ENCODE measurements at regions of chr10 and their contacts with region 1.

Region 1: GRCh38 chr10:27099916-27100812 is at the start of gene ANKRD26:
- DNase-seq: peak; percentile 96 to 98 (median 97)
- H3K4me3 ChIP-seq: peak within 1 kb of the TSS; percentile 50 to 86 (median 53)
- H3K4me3 Mint-ChIP-seq: peak within 1 kb of the TSS; percentile 88 to 97
- H3K27ac ChIP-seq: peak within 1 kb of the TSS; percentile 60 to 84
- H3K27ac Mint-ChIP-seq: peak within 1 kb of the TSS; percentile 89 to 96 (median 94)
- H3K4me1 ChIP-seq: peaks cover 11 to 15% of the 10 kb centered on the region in 2 donors
- H3K4me1 Mint-ChIP-seq: peaks cover 21% of the 10 kb centered on the region
- H3K27me3 ChIP-seq: no peaks in the 10 kb centered on the region
- H3K27me3 Mint-ChIP-seq: peaks cover 0 to 5% (median 1%) of the 10 kb centered on the region in 3 donors
- CTCF ChIP-seq: no peak
- polyA plus RNA-seq, gene ANKRD26: 0.36 to 0.73 (median 0.36) TPM

Region 2: DNA sequence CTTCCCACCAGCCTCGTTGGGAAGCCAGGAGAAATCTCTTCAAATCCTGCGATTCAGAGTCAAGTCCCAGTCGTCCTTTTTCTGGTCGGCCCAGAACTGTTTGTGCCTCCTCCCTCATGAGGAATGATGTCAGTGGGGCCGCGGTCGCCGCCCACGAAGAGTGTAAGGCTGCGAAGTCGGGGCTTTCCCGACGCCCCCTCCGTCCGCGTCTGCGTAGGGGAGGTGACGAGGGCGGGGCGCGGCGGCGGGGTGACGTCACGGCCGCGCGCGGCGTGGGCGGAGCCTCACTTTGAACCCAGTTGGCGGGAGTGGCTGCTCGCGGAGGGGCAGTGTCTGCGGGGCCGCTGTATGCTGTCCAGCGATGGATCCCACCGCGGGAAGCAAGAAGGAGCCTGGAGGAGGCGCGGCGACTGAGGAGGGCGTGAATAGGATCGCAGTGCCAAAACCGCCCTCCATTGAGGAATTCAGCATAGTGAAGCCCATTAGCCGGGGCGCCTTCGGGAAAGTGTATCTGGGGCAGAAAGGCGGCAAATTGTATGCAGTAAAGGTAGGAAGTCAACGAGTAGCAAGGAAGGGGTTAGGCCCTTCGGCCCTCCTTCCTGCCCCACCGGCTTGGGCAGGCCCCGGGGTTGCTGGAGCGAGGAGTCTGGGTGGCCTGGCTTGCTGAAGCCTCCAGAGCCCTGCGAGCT is 55.0 kb after region 1 on chr10 and contains the start of gene MASTL:
- intact Hi-C with region 1: loop called in 1 of 2 experiments (anchors 5 kb)
- DNase-seq: peak; percentile 90 to 96 (median 95)
- H3K4me3 ChIP-seq: peak within 1 kb of the TSS; percentile 78 to 89 (median 85)
- H3K4me3 Mint-ChIP-seq: peak within 1 kb of the TSS; percentile 99 to 100
- H3K27ac ChIP-seq: peak within 1 kb of the TSS; percentile 98 to 99
- H3K27ac Mint-ChIP-seq: peak within 1 kb of the TSS; percentile 100
- H3K4me1 ChIP-seq: peaks cover 19 to 27% of the 10 kb centered on the region in 2 donors
- H3K4me1 Mint-ChIP-seq: peaks cover 34% of the 10 kb centered on the region
- H3K27me3 ChIP-seq: no peaks in the 10 kb centered on the region
- H3K27me3 Mint-ChIP-seq: no peaks in the 10 kb centered on the region
- CTCF ChIP-seq: no peak
- polyA plus RNA-seq, gene MASTL: 0.65 to 4.9 (median 2.4) TPM

Measured in CD14-positive monocyte (primary cell).